Natural killer cell (primary cell): ENCODE measurements at regions of chr10 and their contacts with region 1.

Region 1: GRCh38 chr10:71696628-71697326 is 22.8 kb downstream of the C10orf105 start:
- DNase-seq: peak; percentile 56 to 83
- ATAC-seq: peak; percentile 37 to 58 (median 54)
- H3K4me3 ChIP-seq: no peak overlapping the region
- H3K4me3 Mint-ChIP-seq: peak overlapping the region; percentile 21
- H3K27ac ChIP-seq: no peak overlapping the region
- H3K27ac Mint-ChIP-seq: peak overlapping the region in 1 of 2 donors; percentile 82
- H3K4me1 ChIP-seq: peaks cover 83% of the 10 kb centered on the region
- H3K4me1 Mint-ChIP-seq: peaks cover 44 to 64% of the 10 kb centered on the region in 2 donors
- H3K27me3 ChIP-seq: no peaks in the 10 kb centered on the region
- H3K27me3 Mint-ChIP-seq: no peaks in the 10 kb centered on the region
- CTCF ChIP-seq: peak; percentile 85

Region 2: GRCh38 chr10:71671994-71672946 is 24.5 kb before region 1 on chr10:
- intact Hi-C with region 1: no loop called
- DNase-seq: no peak
- ATAC-seq: no peak
- H3K4me3 ChIP-seq: no peak overlapping the region
- H3K4me3 Mint-ChIP-seq: no peak overlapping the region
- H3K27ac ChIP-seq: no peak overlapping the region
- H3K27ac Mint-ChIP-seq: no peak overlapping the region
- H3K4me1 ChIP-seq: peaks cover 10% of the 10 kb centered on the region
- H3K4me1 Mint-ChIP-seq: peaks cover 5 to 6% of the 10 kb centered on the region in 2 donors
- H3K27me3 ChIP-seq: no peaks in the 10 kb centered on the region
- H3K27me3 Mint-ChIP-seq: peaks cover 0 to 4% of the 10 kb centered on the region in 2 donors
- CTCF ChIP-seq: no peak

Region 3: DNA sequence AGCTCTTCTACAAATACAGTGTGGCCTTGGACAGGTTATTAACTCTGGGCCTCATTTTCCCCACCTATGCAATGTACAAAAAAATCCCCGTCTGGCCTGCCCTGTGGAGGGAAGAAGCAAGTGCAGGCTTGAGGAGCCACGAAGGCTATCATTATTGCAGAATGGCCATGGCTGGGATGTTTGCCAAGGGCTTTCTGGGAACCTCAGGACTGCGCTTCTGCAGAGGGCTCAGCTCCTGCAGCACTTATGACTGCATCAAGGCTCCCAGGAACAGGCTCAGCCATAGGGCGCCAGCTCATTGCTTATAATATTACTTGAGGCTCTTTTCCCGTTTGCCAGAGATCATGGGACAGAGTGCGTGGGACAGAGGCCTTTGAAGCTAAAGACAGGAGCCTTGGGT is 43.3 kb after region 1 on chr10:
- intact Hi-C with region 1: loop called (anchors 5 kb)
- DNase-seq: no peak
- ATAC-seq: no peak
- H3K4me3 ChIP-seq: no peak overlapping the region
- H3K4me3 Mint-ChIP-seq: peak overlapping the region; percentile 55
- H3K27ac ChIP-seq: no peak overlapping the region
- H3K27ac Mint-ChIP-seq: peak overlapping the region; percentile 41 to 90
- H3K4me1 ChIP-seq: peaks cover 98% of the 10 kb centered on the region
- H3K4me1 Mint-ChIP-seq: peaks cover 78 to 88% of the 10 kb centered on the region in 2 donors
- H3K27me3 ChIP-seq: no peaks in the 10 kb centered on the region
- H3K27me3 Mint-ChIP-seq: no peaks in the 10 kb centered on the region
- CTCF ChIP-seq: no peak